Naive thymus-derived CD4-positive, alpha-beta T cell (primary cell): ENCODE measurements at regions of chr3 and their contacts with region 1.

Region 1: GRCh38 chr3:98593046-98593936 is at the start of gene CPOX:
- DNase-seq: peak; percentile 62 to 85 (median 73)
- ATAC-seq: peak; percentile 95
- H3K4me3 ChIP-seq: peak within 1 kb of the TSS; percentile 85
- H3K4me3 Mint-ChIP-seq: peak within 1 kb of the TSS; percentile 91 to 99 (median 98)
- H3K27ac ChIP-seq: peak within 1 kb of the TSS; percentile 69
- H3K27ac Mint-ChIP-seq: peak within 1 kb of the TSS; percentile 87 to 98 (median 95)
- H3K4me1 ChIP-seq: peaks cover 11% of the 10 kb centered on the region in 2 donors
- H3K4me1 Mint-ChIP-seq: peaks cover 30 to 52% (median 40%) of the 10 kb centered on the region in 7 donors
- H3K27me3 ChIP-seq: no peaks in the 10 kb centered on the region
- H3K27me3 Mint-ChIP-seq: no peaks in the 10 kb centered on the region
- total RNA-seq, gene CPOX: 11.4 to 67.5 (median 21.6) TPM

Region 2: GRCh38 chr3:97821810-97822775 is 771.2 kb before region 1 on chr3 and contains the start of gene CRYBG3:
- CTCF ChIA-PET with region 1: no interaction called
- POLR2A ChIA-PET with region 1: no interaction called
- intact Hi-C with region 1: loop called (anchors 5 kb)
- DNase-seq: peak; percentile 64 to 93 (median 81)
- ATAC-seq: peak; percentile 98
- H3K4me3 ChIP-seq: peak within 1 kb of the TSS; percentile 83
- H3K4me3 Mint-ChIP-seq: peak within 1 kb of the TSS; percentile 93 to 98 (median 95)
- H3K27ac ChIP-seq: peak within 1 kb of the TSS; percentile 52
- H3K27ac Mint-ChIP-seq: peak within 1 kb of the TSS; percentile 76 to 98 (median 87)
- H3K4me1 ChIP-seq: peaks cover 0 to 6% of the 10 kb centered on the region in 2 donors
- H3K4me1 Mint-ChIP-seq: peaks cover 14 to 36% (median 21%) of the 10 kb centered on the region in 7 donors
- H3K27me3 ChIP-seq: peaks cover 0 to 3% of the 10 kb centered on the region in 2 donors
- H3K27me3 Mint-ChIP-seq: peaks cover 4 to 29% (median 26%) of the 10 kb centered on the region in 5 donors
- total RNA-seq, gene CRYBG3: 1.8 to 11.2 (median 5.1) TPM

Region 3: DNA sequence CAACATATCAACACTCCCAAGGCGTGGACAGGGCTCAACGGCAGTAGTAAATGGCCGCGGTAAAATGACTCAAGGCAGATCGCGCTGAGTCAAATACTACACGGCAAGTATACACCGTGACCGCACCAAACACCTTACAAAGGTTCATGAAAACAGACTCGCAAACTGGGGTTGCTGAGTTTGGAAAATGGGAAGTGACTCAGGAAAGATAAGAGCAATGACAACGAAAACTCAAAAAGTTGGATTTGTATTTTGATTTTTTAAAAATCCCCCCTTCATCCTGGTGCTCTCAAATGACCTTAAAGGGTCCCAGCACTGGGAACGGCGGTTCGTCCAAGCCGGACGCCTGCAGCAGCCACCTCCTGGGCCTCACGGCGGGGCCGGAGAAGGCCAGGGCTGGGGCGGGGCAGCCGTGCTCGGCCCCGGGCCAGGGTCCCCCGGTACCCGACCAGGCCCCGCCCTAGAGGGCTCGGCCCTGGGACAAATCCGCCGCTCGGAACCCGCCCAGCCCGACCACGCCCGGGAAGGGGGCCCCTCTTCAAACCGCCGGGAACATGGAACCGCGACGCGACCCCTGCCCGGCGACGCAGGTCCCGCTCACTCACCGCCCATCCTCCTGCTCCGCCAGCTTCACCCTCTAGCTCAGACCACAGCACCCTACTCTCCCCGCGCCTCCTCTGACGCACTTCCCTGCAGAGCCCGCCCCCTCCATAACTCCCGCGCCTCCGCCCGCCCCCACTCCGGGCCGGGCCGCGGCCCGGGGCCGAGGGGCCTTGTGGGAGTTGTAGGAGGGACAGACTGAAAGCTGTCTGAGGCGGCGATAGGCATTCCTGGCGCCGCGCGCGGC is 70.8 kb before region 1 on chr3 and contains the start of gene CLDND1:
- CTCF ChIA-PET with region 1: interaction called, 3 read pairs
- POLR2A ChIA-PET with region 1: interaction called, 14 read pairs
- intact Hi-C with region 1: loop called (anchors 1 kb)
- DNase-seq: peak; percentile 88 to 94 (median 93)
- ATAC-seq: peak; percentile 99
- H3K4me3 ChIP-seq: peak within 1 kb of the TSS; percentile 68
- H3K4me3 Mint-ChIP-seq: peak within 1 kb of the TSS; percentile 83 to 99 (median 92)
- H3K27ac ChIP-seq: peak within 1 kb of the TSS; percentile 90
- H3K27ac Mint-ChIP-seq: peak within 1 kb of the TSS; percentile 67 to 99 (median 96)
- H3K4me1 ChIP-seq: peaks cover 16 to 27% of the 10 kb centered on the region in 2 donors
- H3K4me1 Mint-ChIP-seq: peaks cover 31 to 62% (median 53%) of the 10 kb centered on the region in 7 donors
- H3K27me3 ChIP-seq: no peaks in the 10 kb centered on the region
- H3K27me3 Mint-ChIP-seq: no peaks in the 10 kb centered on the region
- total RNA-seq, gene CLDND1: 100 to 478 (median 132) TPM

Region 4: DNA sequence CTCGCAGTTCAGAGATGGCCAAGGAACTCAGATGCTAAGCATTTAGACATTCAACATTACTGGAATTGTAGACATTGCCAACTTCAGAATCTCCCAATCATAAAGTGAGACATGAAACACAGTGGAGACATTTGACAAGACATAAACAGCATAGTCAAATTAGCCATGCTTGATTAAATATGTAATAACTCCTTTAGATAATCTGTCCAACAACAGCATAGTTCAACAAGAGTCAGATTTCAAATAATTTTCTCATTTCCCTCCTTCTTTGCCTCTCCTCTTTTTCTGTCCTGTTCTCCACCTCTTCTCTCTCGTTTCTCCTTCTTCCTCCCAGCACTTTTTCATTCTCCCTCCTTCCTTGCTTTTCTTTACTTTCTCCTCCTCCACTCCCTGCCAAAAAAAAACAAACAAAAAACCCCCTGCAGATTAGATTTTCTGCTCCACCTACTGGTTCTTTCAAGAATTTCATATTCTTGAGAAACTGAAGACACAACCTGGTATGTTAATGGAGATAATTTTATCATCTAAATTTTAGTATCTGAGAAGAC is 20.0 kb before region 1 on chr3:
- CTCF ChIA-PET with region 1: interaction called, 4 read pairs
- POLR2A ChIA-PET with region 1: interaction called, 3 read pairs
- intact Hi-C with region 1: loop called in 1 of 2 experiments (anchors 2 kb)
- DNase-seq: peak in 1 of 9 donors; percentile 17
- ATAC-seq: peak; percentile 45
- H3K4me3 ChIP-seq: no peak overlapping the region
- H3K4me3 Mint-ChIP-seq: peak overlapping the region in 1 of 10 donors; percentile 59
- H3K27ac ChIP-seq: no peak overlapping the region
- H3K27ac Mint-ChIP-seq: peak overlapping the region in 5 of 9 donors; percentile 2 to 80 (median 65)
- H3K4me1 ChIP-seq: peaks cover 0 to 13% of the 10 kb centered on the region in 2 donors
- H3K4me1 Mint-ChIP-seq: peaks cover 4 to 58% (median 11%) of the 10 kb centered on the region in 7 donors
- H3K27me3 ChIP-seq: no peaks in the 10 kb centered on the region
- H3K27me3 Mint-ChIP-seq: no peaks in the 10 kb centered on the region

Region 5: GRCh38 chr3:98705706-98706105 is 112.4 kb after region 1 on chr3:
- CTCF ChIA-PET with region 1: no interaction called
- POLR2A ChIA-PET with region 1: no interaction called
- intact Hi-C with region 1: no loop called
- DNase-seq: no peak
- ATAC-seq: no peak
- H3K4me3 ChIP-seq: no peak overlapping the region
- H3K4me3 Mint-ChIP-seq: no peak overlapping the region
- H3K27ac ChIP-seq: no peak overlapping the region
- H3K27ac Mint-ChIP-seq: no peak overlapping the region
- H3K4me1 ChIP-seq: no peaks in the 10 kb centered on the region
- H3K4me1 Mint-ChIP-seq: no peaks in the 10 kb centered on the region
- H3K27me3 ChIP-seq: no peaks in the 10 kb centered on the region
- H3K27me3 Mint-ChIP-seq: peaks cover 0 to 19% (median 5%) of the 10 kb centered on the region in 5 donors

Region 6: GRCh38 chr3:98901392-98902350 is 308.4 kb after region 1 on chr3 and contains the start of gene DCBLD2:
- CTCF ChIA-PET with region 1: no interaction called
- POLR2A ChIA-PET with region 1: interaction called, 3 read pairs
- intact Hi-C with region 1: loop called (anchors 1 kb)
- DNase-seq: peak; percentile 90 to 96 (median 94)
- ATAC-seq: peak; percentile 99
- H3K4me3 ChIP-seq: peak within 1 kb of the TSS; percentile 86
- H3K4me3 Mint-ChIP-seq: peak within 1 kb of the TSS; percentile 89 to 97 (median 94)
- H3K27ac ChIP-seq: peak within 1 kb of the TSS; percentile 78
- H3K27ac Mint-ChIP-seq: peak within 1 kb of the TSS; percentile 44 to 96 (median 86)
- H3K4me1 ChIP-seq: peaks cover 5% of the 10 kb centered on the region in 2 donors
- H3K4me1 Mint-ChIP-seq: peaks cover 14 to 27% (median 22%) of the 10 kb centered on the region in 7 donors
- H3K27me3 ChIP-seq: no peaks in the 10 kb centered on the region
- H3K27me3 Mint-ChIP-seq: peaks cover 0 to 30% (median 8%) of the 10 kb centered on the region in 5 donors
- total RNA-seq, gene DCBLD2: 1.9 to 4.7 (median 2.9) TPM

Region 7: DNA sequence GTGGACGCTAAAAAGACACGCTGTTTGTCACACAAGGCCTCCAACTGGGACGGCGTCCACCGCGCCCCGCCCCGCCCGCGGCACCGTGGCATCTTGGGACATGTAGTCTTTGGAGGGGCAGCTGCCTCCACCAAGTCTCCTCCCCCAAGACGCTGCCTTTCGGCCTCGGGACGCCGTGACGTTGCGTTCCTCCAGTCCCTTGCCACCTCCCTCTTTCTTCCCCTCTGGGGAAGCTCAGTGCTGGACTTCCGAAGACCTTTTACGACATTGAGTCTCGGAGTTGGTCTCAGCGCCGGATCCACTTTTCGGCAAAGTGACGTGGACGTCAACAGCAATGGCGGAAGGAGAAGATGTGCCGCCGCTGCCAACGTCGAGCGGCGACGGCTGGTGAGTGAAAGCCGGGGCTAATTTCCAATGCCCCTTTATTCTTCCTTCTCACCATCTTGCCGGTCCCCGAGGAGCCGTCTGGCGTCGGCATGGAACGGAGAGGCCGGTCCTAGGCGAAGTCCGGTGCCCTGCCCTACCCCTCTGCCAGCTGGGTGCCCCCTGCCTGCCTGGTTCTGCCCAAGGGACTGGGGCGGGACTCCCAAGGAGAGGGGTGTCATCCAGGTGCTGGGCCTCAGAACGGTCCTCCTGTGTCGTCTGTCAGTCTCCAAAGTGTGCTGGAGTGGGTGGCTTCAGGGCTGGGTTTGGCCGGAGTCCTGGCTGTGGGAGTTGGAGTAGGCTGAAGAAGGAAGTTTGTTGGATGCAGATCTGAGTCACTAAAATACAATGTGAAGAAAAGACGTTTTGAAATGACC is 1667.6 kb after region 1 on chr3 and contains the start of gene TBC1D23:
- CTCF ChIA-PET with region 1: no interaction called
- POLR2A ChIA-PET with region 1: no interaction called
- intact Hi-C with region 1: loop called (anchors 1 to 2 kb)
- DNase-seq: peak; percentile 89 to 98 (median 96)
- ATAC-seq: peak; percentile 99
- H3K4me3 ChIP-seq: peak within 1 kb of the TSS; percentile 92
- H3K4me3 Mint-ChIP-seq: peak within 1 kb of the TSS; percentile 90 to 100 (median 94)
- H3K27ac ChIP-seq: peak within 1 kb of the TSS; percentile 89
- H3K27ac Mint-ChIP-seq: peak within 1 kb of the TSS; percentile 97 to 100 (median 99)
- H3K4me1 ChIP-seq: peaks cover 10 to 20% of the 10 kb centered on the region in 2 donors
- H3K4me1 Mint-ChIP-seq: peaks cover 37 to 75% (median 65%) of the 10 kb centered on the region in 7 donors
- H3K27me3 ChIP-seq: no peaks in the 10 kb centered on the region
- H3K27me3 Mint-ChIP-seq: no peaks in the 10 kb centered on the region
- total RNA-seq, gene TBC1D23: 30.8 to 42.4 (median 33.9) TPM